Activated naive CD4-positive, alpha-beta T cell treated with anti-CD3 and anti-CD28 coated beads for 36 hours (primary cell): ENCODE measurements at regions of chr11 and their contacts with region 1.

Region 1: GRCh38 chr11:62591448-62592145 is at the start of gene TUT1:
- DNase-seq: peak; percentile 98
- H3K4me3 Mint-ChIP-seq: peak within 1 kb of the TSS; percentile 94
- H3K27ac Mint-ChIP-seq: peak within 1 kb of the TSS; percentile 94
- H3K4me1 Mint-ChIP-seq: peaks cover 55% of the 10 kb centered on the region
- H3K27me3 Mint-ChIP-seq: no peaks in the 10 kb centered on the region
- total RNA-seq, gene TUT1: 38.2 to 42.0 TPM

Region 2: GRCh38 chr11:62337303-62338181 is 254.1 kb before region 1 on chr11 and contains the start of gene ASRGL1:
- CTCF ChIA-PET with region 1: no interaction called
- intact Hi-C with region 1: no loop called
- DNase-seq: peak; percentile 75
- H3K4me3 Mint-ChIP-seq: peak within 1 kb of the TSS; percentile 83
- H3K27ac Mint-ChIP-seq: peak within 1 kb of the TSS; percentile 16
- H3K4me1 Mint-ChIP-seq: peaks cover 9% of the 10 kb centered on the region
- H3K27me3 Mint-ChIP-seq: peaks cover 7% of the 10 kb centered on the region
- total RNA-seq, gene ASRGL1: 9.5 to 11.6 TPM

Region 3: GRCh38 chr11:62573592-62574362 is 17.8 kb before region 1 on chr11 and contains the start of gene EEF1G:
- CTCF ChIA-PET with region 1: interaction called, 11 read pairs
- intact Hi-C with region 1: loop called (anchors 1 kb)
- DNase-seq: peak; percentile 99
- H3K4me3 Mint-ChIP-seq: peak within 1 kb of the TSS; percentile 95
- H3K27ac Mint-ChIP-seq: peak within 1 kb of the TSS; percentile 97
- H3K4me1 Mint-ChIP-seq: peaks cover 44% of the 10 kb centered on the region
- H3K27me3 Mint-ChIP-seq: no peaks in the 10 kb centered on the region
- total RNA-seq, gene EEF1G: 2,282 to 2,440 TPM

Region 4: DNA sequence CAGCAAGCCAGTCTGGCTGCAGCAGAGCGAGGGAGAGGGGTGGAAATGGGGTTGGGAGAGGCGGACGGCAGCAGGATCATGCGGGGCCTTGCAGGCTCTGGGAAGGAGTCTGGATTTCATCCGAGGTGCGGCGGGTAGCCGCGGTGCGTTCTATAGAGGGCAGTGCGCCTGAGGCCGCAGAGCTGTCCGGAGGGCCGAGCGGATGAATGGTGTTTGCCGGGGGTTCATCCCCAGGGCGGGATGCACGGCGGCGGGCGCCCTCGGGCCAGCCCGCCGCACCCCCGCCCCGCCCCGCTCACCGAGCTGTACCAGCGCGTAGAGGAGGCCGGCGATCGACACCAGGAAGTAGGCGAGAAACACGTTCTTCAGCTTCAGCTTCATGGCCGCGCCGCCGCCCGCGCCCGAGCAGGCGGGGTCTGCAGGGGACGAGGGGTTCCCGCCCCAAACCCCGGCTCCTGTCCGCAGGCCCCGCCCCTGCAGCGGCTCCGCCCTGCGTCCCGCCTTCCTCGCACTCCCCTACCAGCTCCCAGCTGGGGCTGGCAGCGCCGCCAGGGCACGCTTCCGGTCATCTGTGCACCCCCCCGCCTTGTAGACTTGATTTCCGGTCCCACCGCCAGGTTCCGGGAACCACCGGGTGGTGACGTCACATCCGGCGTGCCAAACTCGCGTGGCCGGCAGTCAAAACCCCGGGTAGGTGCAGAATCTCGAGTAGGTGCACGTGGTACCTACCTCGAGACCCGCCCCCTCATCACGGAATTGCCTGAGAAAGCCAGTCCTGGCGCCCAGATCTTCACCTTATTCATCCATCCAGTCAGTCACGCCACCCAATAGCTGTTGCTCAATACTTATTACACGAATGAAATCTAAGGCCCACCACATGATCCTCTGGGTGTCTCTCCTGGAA is 30.2 kb after region 1 on chr11 and contains the start of gene B3GAT3:
- CTCF ChIA-PET with region 1: interaction called, 9 read pairs
- intact Hi-C with region 1: loop called (anchors 2 kb)
- DNase-seq: peak; percentile 97
- H3K4me3 Mint-ChIP-seq: peak within 1 kb of the TSS; percentile 89
- H3K27ac Mint-ChIP-seq: peak within 1 kb of the TSS; percentile 93
- H3K4me1 Mint-ChIP-seq: peaks cover 23% of the 10 kb centered on the region
- H3K27me3 Mint-ChIP-seq: no peaks in the 10 kb centered on the region
- total RNA-seq, gene B3GAT3: 43.1 to 45.7 TPM

Region 5: DNA sequence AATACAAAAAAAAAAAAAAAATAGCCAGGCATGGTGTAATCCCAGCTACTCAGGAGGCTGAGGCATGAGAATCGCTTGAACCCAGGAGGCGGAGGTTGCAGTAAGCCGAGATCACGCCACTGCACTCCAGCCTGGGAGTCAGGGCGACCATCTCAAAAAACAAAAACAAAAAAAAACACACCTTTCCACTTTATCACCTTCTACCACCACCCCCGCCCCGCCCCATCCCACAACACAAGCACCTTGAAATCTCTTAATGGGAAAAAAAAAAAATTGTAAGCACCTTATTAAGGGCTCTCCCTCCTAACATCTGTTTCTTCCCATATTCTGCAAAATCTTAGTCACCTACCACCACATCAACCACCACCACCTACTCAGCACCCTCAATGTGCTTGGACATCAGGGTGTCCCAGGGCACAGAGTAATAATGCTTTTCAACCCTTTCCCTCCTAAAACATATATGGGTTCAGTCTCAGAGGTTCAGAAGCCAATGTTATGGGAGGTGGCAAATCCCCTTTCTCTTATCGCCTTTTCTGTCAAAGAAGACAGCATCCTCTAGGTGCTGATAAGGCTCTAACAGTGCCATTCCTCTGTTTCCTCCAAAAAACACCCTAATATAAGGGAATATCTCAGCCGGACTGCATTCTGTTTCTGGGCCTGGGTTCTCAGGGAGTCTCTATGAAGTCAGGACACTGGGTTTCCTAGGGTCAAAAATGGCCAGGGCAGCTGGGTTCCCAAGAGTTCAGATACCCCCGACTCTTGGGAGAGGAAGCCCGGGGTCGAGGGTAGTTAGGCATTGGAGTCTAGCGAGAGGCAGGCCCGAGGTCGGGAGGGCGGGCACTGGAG is 60.8 kb after region 1 on chr11:
- CTCF ChIA-PET with region 1: interaction called, 4 read pairs
- intact Hi-C with region 1: loop called (anchors 2 kb)
- DNase-seq: peak; percentile 37
- H3K4me3 Mint-ChIP-seq: peak overlapping the region; percentile 90
- H3K27ac Mint-ChIP-seq: peak overlapping the region; percentile 87
- H3K4me1 Mint-ChIP-seq: peaks cover 25% of the 10 kb centered on the region
- H3K27me3 Mint-ChIP-seq: no peaks in the 10 kb centered on the region

Region 6: DNA sequence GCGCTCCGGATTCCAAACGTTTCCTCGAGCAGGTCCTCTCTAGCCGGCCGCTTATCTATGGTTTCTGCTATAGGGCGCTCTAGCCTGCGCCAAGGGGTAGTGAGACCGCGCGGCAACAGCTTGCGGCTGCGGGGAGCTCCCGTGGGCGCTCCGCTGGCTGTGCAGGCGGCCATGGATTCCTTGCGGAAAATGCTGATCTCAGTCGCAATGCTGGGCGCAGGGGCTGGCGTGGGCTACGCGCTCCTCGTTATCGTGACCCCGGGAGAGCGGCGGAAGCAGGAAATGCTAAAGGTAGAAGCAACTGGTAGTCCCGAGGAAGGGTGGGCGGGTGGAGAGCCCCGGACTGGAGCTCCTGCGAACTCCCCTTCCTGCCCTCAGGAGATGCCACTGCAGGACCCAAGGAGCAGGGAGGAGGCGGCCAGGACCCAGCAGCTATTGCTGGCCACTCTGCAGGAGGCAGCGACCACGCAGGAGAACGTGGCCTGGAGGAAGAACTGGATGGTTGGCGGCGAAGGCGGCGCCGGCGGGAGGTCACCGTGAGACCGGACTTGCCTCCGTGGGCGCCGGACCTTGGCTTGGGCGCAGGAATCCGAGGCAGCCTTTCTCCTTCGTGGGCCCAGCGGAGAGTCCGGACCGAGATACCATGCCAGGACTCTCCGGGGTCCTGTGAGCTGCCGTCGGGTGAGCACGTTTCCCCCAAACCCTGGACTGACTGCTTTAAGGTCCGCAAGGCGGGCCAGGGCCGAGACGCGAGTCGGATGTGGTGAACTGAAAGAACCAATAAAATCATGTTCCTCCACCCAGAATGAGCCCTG is 80.2 kb after region 1 on chr11 and contains the starts of genes LBHD1 and UQCC3:
- CTCF ChIA-PET with region 1: interaction called, 4 read pairs
- intact Hi-C with region 1: loop called (anchors 1 kb)
- DNase-seq: peak; percentile 78
- H3K4me3 Mint-ChIP-seq: peak within 1 kb of the TSS; percentile 99
- H3K27ac Mint-ChIP-seq: peak within 1 kb of the TSS; percentile 98
- H3K4me1 Mint-ChIP-seq: peaks cover 59% of the 10 kb centered on the region
- H3K27me3 Mint-ChIP-seq: no peaks in the 10 kb centered on the region
- total RNA-seq, gene LBHD1: 4.4 to 6.1 TPM
- total RNA-seq, gene UQCC3: 6.0 to 6.4 TPM

Region 7: GRCh38 chr11:62705880-62706849 is 114.6 kb after region 1 on chr11:
- CTCF ChIA-PET with region 1: interaction called, 4 read pairs
- intact Hi-C with region 1: loop called (anchors 1 kb)
- DNase-seq: peak; percentile 95
- H3K4me3 Mint-ChIP-seq: peak overlapping the region; percentile 88
- H3K27ac Mint-ChIP-seq: peak overlapping the region; percentile 24
- H3K4me1 Mint-ChIP-seq: peaks cover 40% of the 10 kb centered on the region
- H3K27me3 Mint-ChIP-seq: no peaks in the 10 kb centered on the region